Ascending aorta (tissue), 2 donors: ENCODE measurements at regions of chr2 and their contacts with region 1.

Region 1: GRCh38 chr2:73385595-73386341 is at the start of gene ALMS1:
- DNase-seq: peak; percentile 74 to 92
- H3K4me3 ChIP-seq: peak within 1 kb of the TSS; percentile 69 to 86
- H3K27ac ChIP-seq: peak within 1 kb of the TSS; percentile 80 to 86
- H3K4me1 ChIP-seq: peaks cover 0 to 8% of the 10 kb centered on the region in 2 donors
- H3K27me3 ChIP-seq: no peaks in the 10 kb centered on the region
- CTCF ChIP-seq: peak in 1 of 3 experiments; percentile 45
- total RNA-seq, gene ALMS1: 12.8 TPM

Region 2: GRCh38 chr2:73112913-73113633 is 272.7 kb before region 1 on chr2 and contains the start of gene RAB11FIP5:
- intact Hi-C with region 1: loop called (anchors 5 kb)
- DNase-seq: peak in 1 of 2 donors; percentile 90
- H3K4me3 ChIP-seq: peak within 1 kb of the TSS; percentile 78 to 84
- H3K27ac ChIP-seq: peak within 1 kb of the TSS; percentile 92 to 98
- H3K4me1 ChIP-seq: peaks cover 0 to 18% of the 10 kb centered on the region in 2 donors
- H3K27me3 ChIP-seq: no peaks in the 10 kb centered on the region
- CTCF ChIP-seq: peak in 1 of 3 experiments; percentile 12
- total RNA-seq, gene RAB11FIP5: 95.3 TPM

Region 3: DNA sequence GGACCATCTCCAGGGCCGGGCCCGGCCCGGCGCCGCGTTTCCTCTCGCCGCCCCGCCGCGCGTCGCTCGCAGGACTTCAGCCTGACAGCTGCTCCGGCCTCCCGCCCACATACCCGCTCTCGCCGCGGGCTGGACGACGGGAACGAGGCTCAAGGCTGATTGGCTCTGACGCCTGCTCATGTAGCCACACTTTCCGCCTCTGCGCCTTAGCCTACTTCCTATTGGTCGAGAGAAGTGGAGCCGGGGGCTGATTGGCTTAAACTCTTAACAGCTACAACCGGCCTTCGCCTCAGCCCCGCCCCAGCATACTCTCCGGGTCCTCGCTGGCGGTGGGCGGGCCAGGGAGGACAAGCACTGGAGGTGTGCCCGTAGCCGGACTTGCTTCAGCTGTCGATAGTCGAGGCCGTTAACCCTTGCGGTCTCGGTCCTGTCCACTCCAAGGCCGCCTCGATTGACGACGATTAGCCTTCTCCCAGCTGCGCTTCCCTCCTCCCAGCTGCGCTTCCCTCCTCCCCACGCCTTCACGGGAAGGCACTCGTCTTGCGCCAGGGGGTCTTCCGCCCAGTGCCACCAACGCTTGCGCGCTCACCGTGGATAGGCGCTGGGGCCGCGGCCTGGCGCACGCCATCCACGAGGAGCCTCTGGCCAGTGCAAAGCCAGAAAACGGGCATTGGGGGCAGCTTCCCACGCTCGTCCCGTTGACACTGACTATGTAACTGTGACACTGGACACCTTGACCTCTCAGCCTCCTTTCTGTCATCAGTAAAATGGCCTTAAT is 152.4 kb before region 1 on chr2 and contains the start of gene PRADC1:
- intact Hi-C with region 1: loop called (anchors 2 kb)
- DNase-seq: peak; percentile 98 to 100
- H3K4me3 ChIP-seq: peak within 1 kb of the TSS; percentile 82 to 85
- H3K27ac ChIP-seq: peak within 1 kb of the TSS; percentile 93 to 96
- H3K4me1 ChIP-seq: peaks cover 4 to 5% of the 10 kb centered on the region in 2 donors
- H3K27me3 ChIP-seq: no peaks in the 10 kb centered on the region
- CTCF ChIP-seq: no peak
- total RNA-seq, gene PRADC1: 77.0 TPM

Region 4: GRCh38 chr2:73243884-73244570 is 141.7 kb before region 1 on chr2:
- intact Hi-C with region 1: no loop called
- DNase-seq: no peak
- H3K4me3 ChIP-seq: no peak overlapping the region
- H3K27ac ChIP-seq: no peak overlapping the region
- H3K4me1 ChIP-seq: no peaks in the 10 kb centered on the region
- H3K27me3 ChIP-seq: no peaks in the 10 kb centered on the region
- CTCF ChIP-seq: no peak

Region 5: GRCh38 chr2:73406996-73407395 is 21.2 kb after region 1 on chr2:
- intact Hi-C with region 1: no loop called
- DNase-seq: no peak
- H3K4me3 ChIP-seq: no peak overlapping the region
- H3K27ac ChIP-seq: no peak overlapping the region
- H3K4me1 ChIP-seq: no peaks in the 10 kb centered on the region
- H3K27me3 ChIP-seq: no peaks in the 10 kb centered on the region
- CTCF ChIP-seq: no peak

Region 6: DNA sequence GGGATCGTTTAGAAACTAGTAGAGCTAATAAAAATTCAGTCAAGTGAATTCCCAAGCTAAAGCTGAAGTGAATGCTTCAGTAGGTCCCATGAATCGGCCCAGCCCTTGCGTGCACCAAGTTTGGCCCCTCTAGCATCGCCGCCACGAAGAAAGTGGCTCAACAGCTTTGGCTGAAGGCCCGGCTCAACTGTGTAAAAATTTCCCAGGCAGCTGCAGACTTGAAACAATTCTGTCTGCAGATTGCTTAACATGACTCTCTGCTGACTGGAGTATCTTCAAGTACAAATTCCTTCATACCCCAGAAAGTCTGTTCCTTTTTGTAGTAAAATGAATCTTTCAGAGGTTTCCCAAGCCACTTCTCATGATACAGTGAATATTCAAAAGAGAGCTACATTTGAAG is 32.6 kb after region 1 on chr2:
- intact Hi-C with region 1: loop called (anchors 1 kb)
- DNase-seq: peak in 1 of 2 donors; percentile 72
- H3K4me3 ChIP-seq: peak overlapping the region in 1 of 2 donors; percentile 10
- H3K27ac ChIP-seq: no peak overlapping the region
- H3K4me1 ChIP-seq: no peaks in the 10 kb centered on the region
- H3K27me3 ChIP-seq: no peaks in the 10 kb centered on the region
- CTCF ChIP-seq: no peak

Region 7: GRCh38 chr2:73575261-73575660 is 189.5 kb after region 1 on chr2:
- intact Hi-C with region 1: no loop called
- DNase-seq: no peak
- H3K4me3 ChIP-seq: no peak overlapping the region
- H3K27ac ChIP-seq: no peak overlapping the region
- H3K4me1 ChIP-seq: no peaks in the 10 kb centered on the region
- H3K27me3 ChIP-seq: no peaks in the 10 kb centered on the region
- CTCF ChIP-seq: no peak

Region 8: GRCh38 chr2:73736855-73737779 is 351.3 kb after region 1 on chr2 and contains the start of gene TPRKB:
- intact Hi-C with region 1: loop called (anchors 5 kb)
- DNase-seq: peak; percentile 84 to 98
- H3K4me3 ChIP-seq: peak within 1 kb of the TSS; percentile 73 to 79
- H3K27ac ChIP-seq: peak within 1 kb of the TSS; percentile 64 to 73
- H3K4me1 ChIP-seq: peaks cover 0 to 16% of the 10 kb centered on the region in 2 donors
- H3K27me3 ChIP-seq: no peaks in the 10 kb centered on the region
- CTCF ChIP-seq: no peak
- total RNA-seq, gene TPRKB: 11.1 TPM

Region 9: GRCh38 chr2:74845217-74846011 is 1459.6 kb after region 1 on chr2:
- intact Hi-C with region 1: loop called (anchors 5 kb)
- DNase-seq: peak; percentile 93 to 95
- H3K4me3 ChIP-seq: no peak overlapping the region
- H3K27ac ChIP-seq: peak overlapping the region; percentile 87 to 92
- H3K4me1 ChIP-seq: peaks cover 10 to 29% of the 10 kb centered on the region in 2 donors
- H3K27me3 ChIP-seq: no peaks in the 10 kb centered on the region
- CTCF ChIP-seq: no peak